ENCODE measurements at regions of chr3 and their contacts with region 1.

Region 1: DNA sequence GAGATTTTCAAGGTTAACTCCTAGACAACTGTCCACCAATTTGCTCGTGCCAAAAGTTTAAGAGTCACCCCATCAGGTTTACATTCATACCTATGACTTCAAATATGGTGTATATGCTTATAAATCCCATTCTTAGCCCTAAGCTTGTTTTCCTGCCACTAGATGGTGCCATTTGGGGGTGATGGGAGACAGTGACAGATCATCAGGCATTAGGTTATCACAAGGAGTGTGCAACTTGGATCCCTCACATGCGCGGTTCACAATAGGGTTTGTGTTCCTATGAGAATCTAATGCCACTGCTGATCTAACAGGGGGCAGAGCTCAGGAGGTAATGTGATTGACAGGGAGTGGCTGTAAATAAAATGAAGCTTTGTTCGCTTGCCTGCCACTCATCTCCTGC is 182.7 kb downstream of the CNTN6 start:
- DNase-seq: peak; percentile 49
- H3K4me3 Mint-ChIP-seq: no peak overlapping the region
- H3K27ac Mint-ChIP-seq: no peak overlapping the region
- H3K4me1 Mint-ChIP-seq: no peaks in the 10 kb centered on the region
- H3K27me3 Mint-ChIP-seq: no peaks in the 10 kb centered on the region
- CTCF ChIP-seq: peak; percentile 45

Region 2: GRCh38 chr3:1469687-1470086 is 194.2 kb after region 1 on chr3:
- CTCF ChIA-PET with region 1: no interaction called
- POLR2A ChIA-PET with region 1: no interaction called
- intact Hi-C with region 1: no loop called
- DNase-seq: no peak
- H3K4me3 Mint-ChIP-seq: no peak overlapping the region
- H3K27ac Mint-ChIP-seq: no peak overlapping the region
- H3K4me1 Mint-ChIP-seq: no peaks in the 10 kb centered on the region
- H3K27me3 Mint-ChIP-seq: no peaks in the 10 kb centered on the region
- CTCF ChIP-seq: no peak

Region 3: DNA sequence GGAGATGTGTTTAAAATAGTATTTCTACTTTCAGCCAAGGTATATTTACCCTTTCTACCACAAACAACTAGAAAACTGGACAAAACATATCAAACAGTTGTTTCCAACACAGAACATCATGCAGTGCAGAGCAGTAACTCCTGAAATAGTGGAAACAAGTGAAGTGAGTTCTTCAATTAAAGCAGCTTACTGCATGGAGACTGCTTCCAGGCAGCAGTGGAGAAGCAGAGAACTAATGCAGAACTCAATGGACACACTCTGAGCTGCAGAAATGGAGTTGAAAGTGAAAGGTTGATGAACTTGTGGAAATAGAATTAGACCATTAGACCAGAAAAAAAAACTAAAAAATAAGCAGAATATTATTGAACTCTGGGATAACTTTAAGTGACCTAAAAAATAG is 296.2 kb after region 1 on chr3:
- CTCF ChIA-PET with region 1: no interaction called
- POLR2A ChIA-PET with region 1: no interaction called
- intact Hi-C with region 1: loop called (anchors 5 kb)
- DNase-seq: no peak
- H3K4me3 Mint-ChIP-seq: no peak overlapping the region
- H3K27ac Mint-ChIP-seq: no peak overlapping the region
- H3K4me1 Mint-ChIP-seq: peaks cover 11% of the 10 kb centered on the region
- H3K27me3 Mint-ChIP-seq: no peaks in the 10 kb centered on the region
- CTCF ChIP-seq: no peak

Region 4: DNA sequence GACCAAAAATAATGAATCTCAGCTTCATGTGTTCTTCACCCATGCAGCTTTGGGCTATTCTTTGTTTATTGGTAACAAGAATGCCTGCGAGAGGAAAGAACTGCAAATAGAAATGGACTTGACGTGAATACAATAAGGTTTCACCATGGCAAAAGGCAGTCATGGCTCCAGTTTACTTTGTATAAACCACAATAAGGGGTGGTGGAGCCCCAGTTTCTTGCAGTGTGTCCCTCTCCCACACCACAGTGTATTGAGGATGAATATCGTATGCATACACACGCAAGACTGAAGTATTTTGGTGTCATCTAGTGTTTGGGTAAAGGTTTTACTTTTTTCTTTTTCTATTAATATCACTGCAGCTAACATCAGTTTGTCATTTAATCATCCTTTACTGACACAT is 663.5 kb after region 1 on chr3:
- CTCF ChIA-PET with region 1: interaction called, 5 read pairs
- POLR2A ChIA-PET with region 1: no interaction called
- intact Hi-C with region 1: loop called (anchors 2 kb)
- DNase-seq: no peak
- H3K4me3 Mint-ChIP-seq: no peak overlapping the region
- H3K27ac Mint-ChIP-seq: no peak overlapping the region
- H3K4me1 Mint-ChIP-seq: no peaks in the 10 kb centered on the region
- H3K27me3 Mint-ChIP-seq: no peaks in the 10 kb centered on the region
- CTCF ChIP-seq: no peak

Region 5: GRCh38 chr3:1987980-1988379 is 712.5 kb after region 1 on chr3:
- CTCF ChIA-PET with region 1: interaction called, 6 read pairs
- POLR2A ChIA-PET with region 1: no interaction called
- intact Hi-C with region 1: loop called (anchors 1 kb)
- DNase-seq: peak; percentile 22
- H3K4me3 Mint-ChIP-seq: no peak overlapping the region
- H3K27ac Mint-ChIP-seq: no peak overlapping the region
- H3K4me1 Mint-ChIP-seq: no peaks in the 10 kb centered on the region
- H3K27me3 Mint-ChIP-seq: no peaks in the 10 kb centered on the region
- CTCF ChIP-seq: peak; percentile 36

Measured in MCF 10A (cell line).